Heart left ventricle (tissue), 16 donors: ENCODE measurements at regions of chr5 and their contacts with region 1.

Region 1: GRCh38 chr5:59174248-59174844 is 591.5 kb downstream of the RAB3C start:
- DNase-seq: peak in 1 of 5 donors; percentile 20
- ATAC-seq: peak; percentile 71 to 86 (median 78)
- H3K4me3 ChIP-seq: no peak overlapping the region
- H3K27ac ChIP-seq: no peak overlapping the region
- H3K4me1 ChIP-seq: peaks cover 0 to 12% (median 0%) of the 10 kb centered on the region in 12 donors
- H3K27me3 ChIP-seq: no peaks in the 10 kb centered on the region
- CTCF ChIP-seq: peak; percentile 58 to 89 (median 82)
- POLR2A ChIP-seq: no peak

Region 2: GRCh38 chr5:58891971-58892343 is 282.4 kb before region 1 on chr5:
- intact Hi-C with region 1: loop called (anchors 2 to 5 kb)
- DNase-seq: no peak
- ATAC-seq: no peak
- H3K4me3 ChIP-seq: no peak overlapping the region
- H3K27ac ChIP-seq: peak overlapping the region in 5 of 12 donors; percentile 18 to 72 (median 63)
- H3K4me1 ChIP-seq: peaks cover 0 to 34% (median 3%) of the 10 kb centered on the region in 12 donors
- H3K27me3 ChIP-seq: no peaks in the 10 kb centered on the region
- CTCF ChIP-seq: peak in 1 of 12 donors; percentile 9
- POLR2A ChIP-seq: no peak